ENCODE measurements at regions of chr11 and their contacts with region 1.

Region 1: DNA sequence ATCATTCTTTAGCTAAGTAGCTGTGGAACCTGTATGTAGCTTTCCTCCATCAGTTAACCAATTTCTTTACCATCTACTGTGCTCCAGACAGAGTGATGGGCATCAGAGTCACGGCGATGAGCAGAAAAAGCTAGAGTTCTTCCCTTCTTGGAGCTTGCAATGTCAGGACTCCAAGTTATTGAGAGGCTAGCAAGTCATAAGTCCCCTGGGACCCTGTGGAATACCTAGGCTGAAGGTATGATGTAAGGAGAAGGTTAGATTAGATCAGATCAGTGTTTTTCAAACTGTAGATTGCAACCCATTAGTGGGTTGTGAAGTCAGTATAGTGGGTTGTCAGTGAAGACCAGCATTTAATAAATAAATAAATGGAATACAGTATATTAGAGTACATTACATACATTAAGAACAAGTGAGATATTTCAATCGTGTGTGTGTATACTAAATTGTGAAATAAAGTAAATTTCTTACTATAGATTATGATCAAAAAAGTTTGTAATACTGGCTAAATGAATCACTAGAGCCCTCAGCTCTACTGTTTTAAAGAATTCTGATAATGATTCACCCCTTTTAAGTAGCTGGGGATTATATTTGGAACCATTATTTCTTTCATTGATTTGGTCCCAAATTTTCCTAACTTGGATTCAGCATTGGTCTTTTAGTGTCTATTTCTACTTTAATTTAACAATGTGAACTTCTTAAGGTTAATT is 52.3 kb downstream of the RASSF10 start:
- DNase-seq: no peak

Region 2: GRCh38 chr11:11192541-11192940 is 1868.9 kb before region 1 on chr11:
- intact Hi-C with region 1: loop called in 1 of 2 experiments (anchors 10 kb)
- DNase-seq: no peak

Region 3: DNA sequence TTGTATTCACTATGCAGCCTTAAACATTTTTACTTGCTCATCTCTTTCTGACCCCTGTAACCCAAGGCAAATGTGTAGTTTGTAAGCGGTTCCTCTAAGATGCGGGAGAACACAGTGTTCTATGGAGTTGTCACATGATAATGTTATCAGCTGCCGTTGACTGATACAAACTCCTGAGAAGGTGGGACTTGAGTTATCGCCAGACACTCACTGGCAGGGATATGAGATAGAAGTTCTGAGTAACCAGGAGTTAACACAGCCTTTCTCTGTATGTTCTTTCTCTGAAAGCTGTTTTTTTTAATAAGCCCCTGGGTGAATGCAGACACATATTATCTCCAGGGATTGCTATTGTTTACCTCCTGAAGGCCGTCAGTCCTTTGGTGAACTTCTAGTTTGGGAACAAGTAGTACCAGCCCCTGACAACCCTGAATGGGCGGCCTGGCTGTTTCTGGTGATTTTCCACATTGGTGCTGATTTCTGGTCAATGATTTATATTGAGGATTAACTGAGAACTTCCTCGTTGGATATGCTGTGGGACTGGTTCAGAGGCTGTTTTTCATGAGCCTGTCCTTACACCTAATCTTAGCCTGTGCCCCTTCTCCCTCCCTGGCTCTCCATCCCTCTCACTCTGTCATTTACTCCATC is 207.7 kb before region 1 on chr11:
- intact Hi-C with region 1: loop called in 1 of 2 experiments (anchors 10 kb)
- DNase-seq: no peak

Region 4: DNA sequence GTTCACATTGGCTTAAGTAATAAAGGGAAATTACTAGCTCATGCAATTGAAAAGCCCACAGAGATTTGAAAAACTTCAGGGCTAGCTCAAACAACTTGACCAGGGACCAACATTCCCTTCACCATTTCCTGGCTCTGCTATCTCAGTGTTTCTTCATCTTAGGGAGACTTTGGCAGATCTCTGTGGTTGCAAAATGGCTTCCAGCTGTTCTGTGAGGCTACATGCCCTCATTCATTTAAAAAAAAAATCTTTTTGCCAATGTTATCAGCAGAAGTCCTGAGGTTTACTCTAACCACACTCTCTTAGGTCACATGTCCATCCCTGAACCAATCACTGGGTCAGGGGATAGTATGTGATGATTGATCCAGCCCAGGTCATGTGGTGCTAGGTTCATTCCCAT is 66.2 kb before region 1 on chr11:
- intact Hi-C with region 1: no loop called
- DNase-seq: no peak